ENCODE measurements at regions of chr19 and their contacts with region 1.

Region 1: GRCh38 chr19:11435058-11435832 is at the starts of genes ODAD3 and PRKCSH:
- DNase-seq: peak; percentile 90 to 99 (median 97)
- ATAC-seq: peak; percentile 97
- H3K4me3 ChIP-seq: peak within 1 kb of the TSS; percentile 77
- H3K4me3 Mint-ChIP-seq: peak within 1 kb of the TSS; percentile 96 to 100 (median 99)
- H3K27ac ChIP-seq: peak within 1 kb of the TSS; percentile 77
- H3K27ac Mint-ChIP-seq: peak within 1 kb of the TSS; percentile 91 to 98 (median 97)
- H3K4me1 ChIP-seq: peaks cover 13 to 16% of the 10 kb centered on the region in 2 donors
- H3K4me1 Mint-ChIP-seq: peaks cover 10 to 34% (median 24%) of the 10 kb centered on the region in 7 donors
- H3K27me3 ChIP-seq: no peaks in the 10 kb centered on the region
- H3K27me3 Mint-ChIP-seq: peaks cover 0 to 8% (median 0%) of the 10 kb centered on the region in 5 donors
- total RNA-seq, gene ODAD3: not detected
- total RNA-seq, gene PRKCSH: 254 to 332 (median 288) TPM

Region 2: GRCh38 chr19:10870955-10871603 is 564.2 kb before region 1 on chr19 and contains the start of gene CARM1:
- CTCF ChIA-PET with region 1: no interaction called
- POLR2A ChIA-PET with region 1: no interaction called
- intact Hi-C with region 1: loop called in 1 of 2 experiments (anchors 1 kb)
- DNase-seq: peak; percentile 99 to 100 (median 99)
- ATAC-seq: peak; percentile 92
- H3K4me3 ChIP-seq: peak within 1 kb of the TSS; percentile 67
- H3K4me3 Mint-ChIP-seq: peak within 1 kb of the TSS; percentile 79 to 91 (median 86)
- H3K27ac ChIP-seq: peak within 1 kb of the TSS; percentile 74
- H3K27ac Mint-ChIP-seq: peak within 1 kb of the TSS; percentile 74 to 96 (median 88)
- H3K4me1 ChIP-seq: peaks cover 10 to 14% of the 10 kb centered on the region in 2 donors
- H3K4me1 Mint-ChIP-seq: peaks cover 5 to 33% (median 25%) of the 10 kb centered on the region in 7 donors
- H3K27me3 ChIP-seq: no peaks in the 10 kb centered on the region
- H3K27me3 Mint-ChIP-seq: no peaks in the 10 kb centered on the region
- total RNA-seq, gene CARM1: 21.3 to 43.1 (median 27.2) TPM

Region 3: GRCh38 chr19:11155373-11156120 is 279.7 kb before region 1 on chr19 and contains the start of gene SPC24:
- CTCF ChIA-PET with region 1: no interaction called
- POLR2A ChIA-PET with region 1: no interaction called
- intact Hi-C with region 1: loop called in 1 of 2 experiments (anchors 5 kb)
- DNase-seq: peak; percentile 70 to 93 (median 90)
- ATAC-seq: peak; percentile 98
- H3K4me3 ChIP-seq: peak within 1 kb of the TSS; percentile 71
- H3K4me3 Mint-ChIP-seq: peak within 1 kb of the TSS; percentile 79 to 94 (median 89)
- H3K27ac ChIP-seq: peak within 1 kb of the TSS; percentile 16
- H3K27ac Mint-ChIP-seq: peak within 1 kb of the TSS; percentile 54 to 92 (median 83)
- H3K4me1 ChIP-seq: peaks cover 6 to 15% of the 10 kb centered on the region in 2 donors
- H3K4me1 Mint-ChIP-seq: peaks cover 7 to 30% (median 15%) of the 10 kb centered on the region in 7 donors
- H3K27me3 ChIP-seq: no peaks in the 10 kb centered on the region
- H3K27me3 Mint-ChIP-seq: no peaks in the 10 kb centered on the region
- total RNA-seq, gene SPC24: 0.56 to 45.4 (median 1.9) TPM

Region 4: DNA sequence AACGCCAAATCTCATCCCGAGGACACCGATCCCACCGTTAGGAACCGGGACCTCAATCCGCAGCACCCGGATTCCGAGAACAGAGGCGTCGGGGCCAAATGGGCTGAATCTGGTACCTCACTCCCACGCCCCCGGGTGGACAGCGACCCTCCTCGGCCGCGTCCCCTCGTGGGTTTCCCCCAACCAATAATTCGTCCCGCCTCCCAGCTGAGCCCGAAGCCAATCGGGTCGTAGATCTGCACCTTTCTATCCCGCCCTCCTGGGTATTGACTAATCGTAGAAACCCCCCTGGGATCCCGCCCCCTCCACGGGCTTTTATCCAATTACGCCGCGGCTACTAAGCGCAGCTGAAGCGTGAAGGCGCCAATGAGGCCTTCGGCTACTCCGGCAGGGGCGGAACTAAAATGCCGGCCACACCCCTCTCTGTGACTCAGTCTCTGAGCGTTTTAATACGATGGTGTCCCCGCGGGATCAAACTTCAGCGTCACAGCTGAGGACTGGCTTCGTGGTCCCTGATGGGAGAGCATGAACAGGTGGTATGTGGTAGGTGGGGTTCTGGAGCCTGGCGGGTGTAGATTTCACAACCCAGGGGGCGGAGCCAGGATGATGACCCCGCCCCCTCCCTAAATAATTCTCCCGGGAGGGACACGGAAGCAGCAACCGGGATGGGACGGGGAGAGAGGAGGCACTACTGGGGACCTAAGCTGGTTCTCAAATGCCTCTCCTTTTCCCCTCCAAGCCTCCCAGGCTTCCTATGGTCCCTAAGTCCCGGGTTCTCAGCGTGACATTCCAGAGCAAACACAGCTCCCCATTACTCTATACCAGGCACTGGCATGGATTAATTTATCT is 88.9 kb before region 1 on chr19 and contains the starts of genes CCDC159 and TMEM205:
- CTCF ChIA-PET with region 1: interaction called, 3 read pairs
- POLR2A ChIA-PET with region 1: no interaction called
- intact Hi-C with region 1: loop called (anchors 1 kb)
- DNase-seq: peak; percentile 82 to 99 (median 98)
- ATAC-seq: peak; percentile 98
- H3K4me3 ChIP-seq: peak within 1 kb of the TSS; percentile 75
- H3K4me3 Mint-ChIP-seq: peak within 1 kb of the TSS; percentile 92 to 100 (median 98)
- H3K27ac ChIP-seq: peak within 1 kb of the TSS; percentile 83
- H3K27ac Mint-ChIP-seq: peak within 1 kb of the TSS; percentile 89 to 98 (median 96)
- H3K4me1 ChIP-seq: peaks cover 13 to 14% of the 10 kb centered on the region in 2 donors
- H3K4me1 Mint-ChIP-seq: peaks cover 22 to 39% (median 29%) of the 10 kb centered on the region in 7 donors
- H3K27me3 ChIP-seq: no peaks in the 10 kb centered on the region
- H3K27me3 Mint-ChIP-seq: no peaks in the 10 kb centered on the region
- total RNA-seq, gene CCDC159: 17.6 to 87.4 (median 84.3) TPM
- total RNA-seq, gene TMEM205: 19.5 to 36.7 (median 29.5) TPM

Region 5: GRCh38 chr19:11422163-11423021 is 12.9 kb before region 1 on chr19:
- CTCF ChIA-PET with region 1: interaction called, 5 read pairs
- POLR2A ChIA-PET with region 1: interaction called, 6 read pairs
- intact Hi-C with region 1: loop called in 1 of 2 experiments (anchors 1 kb)
- DNase-seq: peak; percentile 27 to 72 (median 39)
- ATAC-seq: peak; percentile 81
- H3K4me3 ChIP-seq: peak overlapping the region; percentile 47
- H3K4me3 Mint-ChIP-seq: peak overlapping the region; percentile 74 to 85 (median 81)
- H3K27ac ChIP-seq: no peak overlapping the region
- H3K27ac Mint-ChIP-seq: no peak overlapping the region
- H3K4me1 ChIP-seq: peaks cover 14 to 40% of the 10 kb centered on the region in 2 donors
- H3K4me1 Mint-ChIP-seq: peaks cover 27 to 45% (median 37%) of the 10 kb centered on the region in 7 donors
- H3K27me3 ChIP-seq: peaks cover 9 to 36% of the 10 kb centered on the region in 2 donors
- H3K27me3 Mint-ChIP-seq: peaks cover 34 to 64% (median 48%) of the 10 kb centered on the region in 5 donors

Region 6: DNA sequence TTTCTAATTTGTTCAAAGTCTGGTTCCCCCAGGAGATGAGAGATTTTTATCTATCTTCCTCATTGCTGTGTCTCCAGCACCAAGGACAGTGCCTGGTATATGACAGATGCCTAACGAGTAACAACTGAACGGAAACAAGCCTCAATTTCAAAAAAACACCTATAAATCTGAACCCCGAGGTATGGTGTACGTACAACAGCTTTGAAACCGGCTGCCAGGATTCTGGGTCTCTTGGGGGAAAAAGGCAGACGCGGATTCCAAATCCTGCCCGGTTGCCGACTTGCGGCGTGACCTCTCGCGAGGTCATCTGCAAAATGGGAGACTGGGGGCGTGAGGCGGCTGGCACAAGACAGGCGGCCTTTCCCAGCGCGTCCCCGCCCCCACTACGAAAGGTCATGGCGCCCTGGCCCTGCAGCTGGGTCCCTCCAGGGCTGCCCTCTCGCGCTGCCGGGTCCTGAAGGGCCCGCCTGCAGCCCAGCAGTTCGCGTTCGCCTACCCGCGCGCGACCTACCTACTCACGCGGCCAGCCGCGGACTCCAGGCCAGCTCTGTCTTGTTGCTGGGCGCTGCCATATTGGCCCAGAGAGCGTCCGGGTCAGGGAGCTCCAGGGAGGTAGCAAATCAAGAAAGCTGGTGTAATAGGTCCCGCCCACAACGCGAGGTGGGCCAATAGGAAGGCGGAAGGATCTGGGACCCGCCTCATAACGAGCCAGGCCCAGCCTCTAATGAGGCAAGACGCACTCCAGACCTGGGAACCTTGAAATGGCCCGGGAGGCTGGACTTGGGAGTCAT is 93.5 kb after region 1 on chr19 and contains the start of gene ECSIT:
- CTCF ChIA-PET with region 1: no interaction called
- POLR2A ChIA-PET with region 1: interaction called, 4 read pairs
- intact Hi-C with region 1: loop called (anchors 1 kb)
- DNase-seq: peak; percentile 78 to 93 (median 89)
- ATAC-seq: peak; percentile 99
- H3K4me3 ChIP-seq: peak within 1 kb of the TSS; percentile 90
- H3K4me3 Mint-ChIP-seq: peak within 1 kb of the TSS; percentile 89 to 99 (median 96)
- H3K27ac ChIP-seq: peak within 1 kb of the TSS; percentile 77
- H3K27ac Mint-ChIP-seq: peak within 1 kb of the TSS; percentile 85 to 96 (median 94)
- H3K4me1 ChIP-seq: peaks cover 8 to 10% of the 10 kb centered on the region in 2 donors
- H3K4me1 Mint-ChIP-seq: peaks cover 12 to 27% (median 21%) of the 10 kb centered on the region in 7 donors
- H3K27me3 ChIP-seq: no peaks in the 10 kb centered on the region
- H3K27me3 Mint-ChIP-seq: no peaks in the 10 kb centered on the region
- total RNA-seq, gene ECSIT: 25.8 to 50.3 (median 32.5) TPM

Region 7: DNA sequence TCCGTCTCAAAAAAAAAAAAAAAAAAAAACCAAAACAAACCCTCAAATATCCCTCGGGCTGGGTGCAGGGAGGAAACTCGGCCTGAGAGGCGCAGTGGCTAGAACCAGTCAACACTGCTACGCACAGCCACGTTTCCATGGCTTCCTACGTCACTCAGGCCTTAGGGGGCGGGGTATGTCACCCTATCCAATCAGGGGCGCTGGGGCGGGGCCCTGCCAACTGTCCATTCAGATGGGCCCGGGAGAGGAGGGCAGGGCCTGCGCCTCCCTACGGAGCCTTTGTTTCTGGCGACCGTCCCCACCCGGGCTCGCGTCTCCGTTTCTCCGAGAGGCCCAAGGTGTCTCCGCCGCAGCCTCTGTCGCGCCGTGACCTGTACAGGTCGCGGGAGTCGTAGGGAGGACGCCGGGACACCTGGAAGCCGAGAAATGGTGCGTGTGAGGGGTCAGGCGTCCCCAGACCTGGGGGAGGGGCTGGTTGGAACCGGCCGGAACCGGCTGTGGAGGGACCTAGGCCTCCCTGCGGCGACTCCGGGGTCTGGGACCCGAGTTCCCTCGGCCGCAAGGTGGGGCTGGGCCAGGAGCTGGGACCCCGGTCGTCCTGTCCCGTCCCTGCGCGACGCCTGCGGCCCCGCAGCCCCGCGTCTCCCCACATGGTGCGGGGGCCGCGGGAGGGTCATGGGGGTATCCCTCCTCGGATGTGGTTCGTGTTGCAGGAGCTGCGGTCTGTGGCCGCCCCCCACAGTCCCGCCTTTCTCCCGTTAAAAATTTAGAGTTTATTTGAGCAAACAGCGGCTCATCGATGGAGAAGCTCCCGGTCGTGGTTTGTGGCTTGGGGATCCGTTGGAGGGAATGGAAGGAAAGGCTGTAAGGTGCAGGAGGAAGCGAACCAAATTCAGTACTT is 162.2 kb after region 1 on chr19 and contains the start of gene ZNF627:
- CTCF ChIA-PET with region 1: no interaction called
- POLR2A ChIA-PET with region 1: no interaction called
- intact Hi-C with region 1: loop called in 1 of 2 experiments (anchors 1 kb)
- DNase-seq: peak; percentile 87 to 98 (median 96)
- ATAC-seq: peak; percentile 100
- H3K4me3 ChIP-seq: peak within 1 kb of the TSS; percentile 85
- H3K4me3 Mint-ChIP-seq: peak within 1 kb of the TSS; percentile 87 to 96 (median 92)
- H3K27ac ChIP-seq: peak within 1 kb of the TSS; percentile 88
- H3K27ac Mint-ChIP-seq: peak within 1 kb of the TSS; percentile 68 to 95 (median 91)
- H3K4me1 ChIP-seq: peaks cover 3 to 14% of the 10 kb centered on the region in 2 donors
- H3K4me1 Mint-ChIP-seq: peaks cover 18 to 43% (median 27%) of the 10 kb centered on the region in 7 donors
- H3K27me3 ChIP-seq: no peaks in the 10 kb centered on the region
- H3K27me3 Mint-ChIP-seq: no peaks in the 10 kb centered on the region
- total RNA-seq, gene ZNF627: 5.2 to 15.4 (median 12.3) TPM